ENCODE measurements at regions of chr12 and their contacts with region 1.

Region 1: GRCh38 chr12:45543906-45544315 is 185.6 kb upstream of the ARID2 start:
- DNase-seq: peak; percentile 67
- H3K4me3 ChIP-seq: no peak overlapping the region
- H3K27ac ChIP-seq: no peak overlapping the region
- H3K4me1 ChIP-seq: no peaks in the 10 kb centered on the region
- CTCF ChIP-seq: peak; percentile 91

Region 2: DNA sequence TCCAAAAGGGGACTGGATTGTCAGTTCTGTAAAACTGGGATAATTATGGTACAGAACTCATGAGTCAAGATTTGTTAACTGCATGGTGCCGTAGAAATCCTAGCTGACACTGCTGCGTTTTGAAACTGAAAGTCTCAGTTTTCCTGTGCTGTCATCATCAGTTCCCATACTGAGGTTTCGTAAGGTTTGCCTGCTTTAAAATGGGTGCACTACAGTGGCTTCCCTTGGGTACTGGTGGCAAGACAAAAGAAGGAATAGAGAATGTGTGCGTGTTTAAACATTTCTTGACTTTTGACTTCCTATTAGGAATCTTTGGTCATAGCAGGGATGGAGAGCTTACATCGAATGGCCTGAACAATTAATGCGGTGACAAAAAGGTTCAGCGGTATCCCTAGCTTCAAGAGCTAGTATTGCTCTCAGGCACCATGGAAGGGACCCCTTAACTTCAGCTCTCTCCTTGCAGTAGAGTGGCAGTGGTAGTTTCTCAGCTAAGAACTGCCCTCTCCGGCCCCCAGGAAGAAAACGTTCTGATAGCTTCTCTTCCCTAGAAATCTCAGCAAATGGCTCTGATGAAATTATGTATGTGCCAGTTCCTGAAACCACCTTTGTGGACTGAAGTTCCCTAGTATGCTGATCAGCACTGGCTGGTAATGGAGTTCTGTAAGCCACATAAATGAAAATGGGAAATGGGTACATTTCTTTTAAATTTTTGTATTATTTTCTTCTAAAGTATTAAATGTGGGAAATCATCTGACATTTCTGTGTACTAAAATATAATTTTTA is 299.2 kb before region 1 on chr12:
- CTCF ChIA-PET with region 1: no interaction called
- POLR2A ChIA-PET with region 1: no interaction called
- intact Hi-C with region 1: no loop called
- DNase-seq: peak; percentile 8
- H3K4me3 ChIP-seq: no peak overlapping the region
- H3K27ac ChIP-seq: no peak overlapping the region
- H3K4me1 ChIP-seq: peaks cover 12% of the 10 kb centered on the region
- CTCF ChIP-seq: no peak

Region 3: GRCh38 chr12:45914090-45914489 is 370.2 kb after region 1 on chr12:
- CTCF ChIA-PET with region 1: no interaction called
- POLR2A ChIA-PET with region 1: no interaction called
- intact Hi-C with region 1: loop called (anchors 10 kb)
- DNase-seq: no peak
- H3K4me3 ChIP-seq: no peak overlapping the region
- H3K27ac ChIP-seq: no peak overlapping the region
- H3K4me1 ChIP-seq: peaks cover 19% of the 10 kb centered on the region
- CTCF ChIP-seq: no peak

Region 4: GRCh38 chr12:46005151-46005797 is 461.4 kb after region 1 on chr12:
- CTCF ChIA-PET with region 1: no interaction called
- POLR2A ChIA-PET with region 1: no interaction called
- intact Hi-C with region 1: loop called (anchors 5 kb)
- DNase-seq: peak; percentile 32
- H3K4me3 ChIP-seq: no peak overlapping the region
- H3K27ac ChIP-seq: no peak overlapping the region
- H3K4me1 ChIP-seq: no peaks in the 10 kb centered on the region
- CTCF ChIP-seq: peak; percentile 83